OCI-LY7 (cell line): ENCODE measurements at regions of chr12 and their contacts with region 1.

Region 1: DNA sequence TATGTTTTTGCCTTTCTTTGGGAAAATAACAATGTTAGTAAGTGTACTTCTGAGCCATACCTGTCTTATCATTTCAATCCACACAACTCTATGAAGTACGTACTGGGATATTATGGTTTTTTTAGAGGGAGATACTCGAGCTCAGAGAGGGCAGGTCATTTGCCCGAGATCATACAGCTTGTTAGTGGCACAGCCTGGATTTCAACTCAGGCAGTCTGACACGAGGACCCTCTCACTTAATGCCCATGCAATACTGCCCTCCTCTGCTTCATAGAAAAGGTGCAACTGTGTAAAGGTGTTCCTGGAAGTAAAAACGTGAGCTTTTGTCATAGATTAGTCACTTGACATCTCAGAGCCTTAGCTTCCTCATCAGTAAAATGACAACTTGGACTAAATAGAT is 128.0 kb downstream of the NDUFA12 start:
- DNase-seq: peak; percentile 87
- H3K4me3 ChIP-seq: no peak overlapping the region
- H3K27ac ChIP-seq: no peak overlapping the region
- H3K4me1 ChIP-seq: peaks cover 38% of the 10 kb centered on the region
- CTCF ChIP-seq: peak; percentile 86

Region 2: GRCh38 chr12:94149119-94149780 is 726.3 kb before region 1 on chr12:
- CTCF ChIA-PET with region 1: no interaction called
- POLR2A ChIA-PET with region 1: no interaction called
- intact Hi-C with region 1: loop called (anchors 5 kb)
- DNase-seq: peak; percentile 69
- H3K4me3 ChIP-seq: peak overlapping the region; percentile 71
- H3K27ac ChIP-seq: no peak overlapping the region
- H3K4me1 ChIP-seq: peaks cover 19% of the 10 kb centered on the region
- CTCF ChIP-seq: peak; percentile 75

Region 3: DNA sequence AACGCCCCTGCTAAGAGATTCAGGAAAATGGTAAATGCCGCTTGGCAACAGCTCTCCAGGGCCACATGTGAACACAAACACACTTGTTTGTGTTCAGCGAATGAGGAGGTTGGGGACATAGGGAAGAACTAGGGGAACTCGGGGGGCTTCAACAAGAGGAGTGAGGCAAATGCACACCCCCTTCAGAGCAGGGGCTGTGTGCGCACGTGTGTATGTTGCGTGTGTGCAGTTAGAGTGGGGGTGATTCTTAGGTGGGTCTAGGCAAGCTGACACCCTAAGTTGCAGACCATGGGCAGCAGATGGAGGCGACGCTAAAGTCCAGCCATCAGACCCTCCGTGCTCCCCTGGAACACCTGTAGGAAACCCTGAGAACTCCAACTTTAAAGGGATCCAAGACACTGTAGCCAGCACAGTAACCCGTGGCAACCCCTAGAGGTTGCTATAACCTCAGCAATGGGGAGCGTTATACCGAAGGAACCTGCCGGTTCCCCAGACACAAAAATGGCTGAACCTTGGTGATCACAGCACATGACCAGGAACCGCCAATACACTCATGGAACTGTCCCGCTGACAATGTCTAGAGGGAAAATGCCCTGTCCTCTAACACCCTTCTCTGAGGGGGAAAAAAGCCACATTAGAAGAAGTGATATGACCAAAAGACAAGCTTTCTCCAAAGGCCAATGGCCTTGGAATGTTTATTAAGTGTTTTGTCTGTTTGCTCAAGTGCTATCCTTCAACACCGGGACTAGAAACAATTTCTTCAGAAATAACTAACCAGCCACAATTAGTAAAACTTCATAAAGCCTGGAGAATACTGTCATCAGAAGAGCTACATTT is 329.4 kb before region 1 on chr12:
- CTCF ChIA-PET with region 1: no interaction called
- POLR2A ChIA-PET with region 1: no interaction called
- intact Hi-C with region 1: loop called (anchors 5 kb)
- DNase-seq: peak; percentile 43
- H3K4me3 ChIP-seq: no peak overlapping the region
- H3K27ac ChIP-seq: no peak overlapping the region
- H3K4me1 ChIP-seq: no peaks in the 10 kb centered on the region
- CTCF ChIP-seq: peak; percentile 72

Region 4: GRCh38 chr12:94603434-94604365 is 271.8 kb before region 1 on chr12:
- CTCF ChIA-PET with region 1: interaction called, 3 read pairs
- POLR2A ChIA-PET with region 1: no interaction called
- intact Hi-C with region 1: loop called (anchors 1 kb)
- DNase-seq: peak; percentile 61
- H3K4me3 ChIP-seq: no peak overlapping the region
- H3K27ac ChIP-seq: no peak overlapping the region
- H3K4me1 ChIP-seq: no peaks in the 10 kb centered on the region
- CTCF ChIP-seq: peak; percentile 96

Region 5: DNA sequence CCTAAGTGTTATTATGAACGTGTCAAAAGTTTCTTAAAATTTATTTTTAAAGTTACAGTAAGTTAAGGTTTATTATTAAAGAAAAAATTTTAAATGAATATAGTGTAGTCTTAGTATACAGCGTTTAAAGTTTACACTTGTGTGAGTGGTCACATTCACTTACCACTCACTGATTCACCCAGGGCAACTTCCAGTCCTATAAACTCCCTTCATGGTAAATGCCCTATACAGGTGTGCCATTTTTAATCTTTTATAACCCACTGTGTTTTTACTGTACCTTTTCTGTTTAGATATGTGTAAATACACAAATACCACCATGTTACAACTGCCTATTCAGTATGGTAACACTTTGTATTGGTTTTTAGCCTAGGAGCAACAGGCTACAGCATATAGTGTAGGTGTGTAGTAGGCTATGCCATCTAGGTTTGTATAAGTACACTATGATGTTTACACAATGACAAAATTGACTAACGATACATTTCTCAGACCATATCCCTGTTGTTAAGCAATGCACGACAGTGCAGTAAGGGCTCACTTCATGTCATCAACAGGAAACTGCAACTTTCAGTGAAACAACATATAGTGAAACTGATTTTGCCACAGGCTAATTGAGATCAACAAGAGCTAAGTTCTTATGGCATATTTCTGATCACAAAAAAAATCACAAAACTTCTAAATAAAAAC is 113.1 kb before region 1 on chr12:
- CTCF ChIA-PET with region 1: interaction called, 4 read pairs
- POLR2A ChIA-PET with region 1: interaction called, 6 read pairs
- intact Hi-C with region 1: loop called (anchors 1 kb)
- DNase-seq: peak; percentile 50
- H3K4me3 ChIP-seq: no peak overlapping the region
- H3K27ac ChIP-seq: peak overlapping the region; percentile 5
- H3K4me1 ChIP-seq: peaks cover 35% of the 10 kb centered on the region
- CTCF ChIP-seq: no peak

Region 6: GRCh38 chr12:94817695-94818075 is 57.8 kb before region 1 on chr12:
- CTCF ChIA-PET with region 1: interaction called, 30 read pairs
- POLR2A ChIA-PET with region 1: interaction called, 17 read pairs
- intact Hi-C with region 1: loop called (anchors 1 kb)
- DNase-seq: no peak
- H3K4me3 ChIP-seq: peak overlapping the region; percentile 65
- H3K27ac ChIP-seq: peak overlapping the region; percentile 100
- H3K4me1 ChIP-seq: peaks cover 63% of the 10 kb centered on the region
- CTCF ChIP-seq: no peak

Region 7: DNA sequence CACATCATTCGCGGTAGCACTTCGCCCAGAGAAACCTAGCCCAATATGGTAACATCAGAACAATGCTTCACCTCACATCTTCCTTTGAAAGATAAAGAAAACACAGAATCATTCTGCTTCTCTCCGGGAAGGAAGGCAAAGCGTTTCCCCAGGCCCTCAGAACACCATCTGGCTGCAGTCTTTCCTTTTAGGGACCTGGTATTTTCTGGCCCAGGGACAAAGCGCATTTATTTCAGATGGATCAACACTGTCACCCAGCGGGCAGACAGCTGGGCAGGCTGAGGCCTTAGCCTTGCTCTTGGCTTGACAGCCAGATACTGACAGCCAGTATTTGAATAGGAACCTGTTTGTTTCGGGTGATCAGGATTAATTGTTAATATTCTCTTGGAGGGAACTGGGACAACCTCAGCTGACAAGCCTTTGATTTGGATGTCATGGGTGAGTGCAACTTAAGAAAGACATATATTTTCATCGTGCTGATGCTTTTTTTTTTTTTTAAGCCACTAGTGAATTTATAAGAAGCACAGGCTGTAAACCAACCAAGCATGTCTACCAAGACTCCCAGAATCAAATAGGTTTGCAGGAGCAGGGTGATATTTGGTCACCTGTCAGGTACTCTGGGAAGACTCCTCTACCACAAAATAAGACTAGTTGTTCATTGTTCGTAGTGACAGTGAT is 461.0 kb after region 1 on chr12:
- CTCF ChIA-PET with region 1: no interaction called
- POLR2A ChIA-PET with region 1: no interaction called
- intact Hi-C with region 1: loop called (anchors 5 kb)
- DNase-seq: peak; percentile 89
- H3K4me3 ChIP-seq: peak overlapping the region; percentile 59
- H3K27ac ChIP-seq: peak overlapping the region; percentile 68
- H3K4me1 ChIP-seq: peaks cover 80% of the 10 kb centered on the region
- CTCF ChIP-seq: peak; percentile 98